ENCODE measurements at regions of chr4 and their contacts with region 1.

Region 1: GRCh38 chr4:24928708-24929107 is 15.9 kb upstream of the CCDC149 start:
- DNase-seq: peak; percentile 39 to 73 (median 67)
- H3K4me3 ChIP-seq: peak overlapping the region in 1 of 3 experiments; percentile 23
- H3K4me3 Mint-ChIP-seq: peak overlapping the region in 1 of 2 donors; percentile 5
- H3K27ac ChIP-seq: peak overlapping the region in 1 of 2 donors; percentile 34
- H3K27ac Mint-ChIP-seq: peak overlapping the region; percentile 34 to 81 (median 67)
- H3K4me1 ChIP-seq: peaks cover 49 to 50% of the 10 kb centered on the region in 2 donors
- H3K4me1 Mint-ChIP-seq: peaks cover 48% of the 10 kb centered on the region
- H3K27me3 ChIP-seq: no peaks in the 10 kb centered on the region
- H3K27me3 Mint-ChIP-seq: peaks cover 0 to 2% (median 2%) of the 10 kb centered on the region in 3 donors
- CTCF ChIP-seq: no peak

Region 2: DNA sequence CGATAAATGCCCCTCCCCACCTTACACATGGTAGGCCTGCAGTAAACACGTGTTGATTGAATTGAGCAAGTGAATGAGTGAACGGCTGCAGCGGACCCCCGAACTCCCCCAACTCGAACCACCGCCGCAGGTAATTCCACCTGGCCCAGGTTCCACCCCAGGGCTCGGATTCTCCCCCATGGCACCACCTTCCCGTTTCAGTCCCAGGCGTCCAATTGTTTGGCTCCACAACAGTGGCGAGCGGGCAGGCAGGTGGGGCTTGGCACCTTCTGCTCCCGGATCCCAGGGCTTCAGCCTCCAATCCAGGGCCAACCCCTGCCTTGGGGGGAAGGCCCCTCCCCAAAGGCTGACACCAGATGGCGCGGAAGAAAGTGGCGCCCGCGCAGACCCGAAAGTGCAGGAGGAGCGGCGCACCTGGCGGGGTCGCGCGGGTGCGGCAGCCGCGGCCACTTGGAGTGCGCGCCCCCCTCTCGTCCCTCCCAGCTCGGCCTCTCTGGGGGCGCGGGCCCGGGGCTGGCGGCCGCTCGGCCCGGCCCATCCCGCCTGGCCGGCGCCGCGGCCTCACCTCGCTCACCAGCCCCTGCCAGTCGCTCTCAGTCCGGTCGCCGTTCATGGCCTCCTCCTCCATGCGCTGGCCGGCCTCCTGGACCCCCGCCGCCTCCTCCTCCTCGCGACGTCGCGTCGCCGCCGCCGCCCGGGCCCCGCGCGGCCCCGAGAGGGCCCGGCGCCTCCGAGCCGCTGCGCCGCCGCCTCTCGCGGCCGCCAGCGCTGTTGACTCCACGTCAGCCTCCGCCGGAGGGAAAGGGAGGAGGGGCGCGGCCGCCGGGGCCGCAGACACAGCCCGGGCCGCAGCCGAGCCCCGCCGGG is 16.2 kb before region 1 on chr4 and contains the start of gene CCDC149:
- intact Hi-C with region 1: no loop called
- DNase-seq: peak; percentile 34 to 49 (median 35)
- H3K4me3 ChIP-seq: peak within 1 kb of the TSS; percentile 57 to 87 (median 79)
- H3K4me3 Mint-ChIP-seq: peak within 1 kb of the TSS; percentile 86 to 91
- H3K27ac ChIP-seq: peak within 1 kb of the TSS; percentile 14 to 73
- H3K27ac Mint-ChIP-seq: peak within 1 kb of the TSS; percentile 62 to 93 (median 77)
- H3K4me1 ChIP-seq: peaks cover 19 to 20% of the 10 kb centered on the region in 2 donors
- H3K4me1 Mint-ChIP-seq: peaks cover 25% of the 10 kb centered on the region
- H3K27me3 ChIP-seq: no peaks in the 10 kb centered on the region
- H3K27me3 Mint-ChIP-seq: peaks cover 0 to 4% (median 2%) of the 10 kb centered on the region in 3 donors
- CTCF ChIP-seq: no peak
- polyA plus RNA-seq, gene CCDC149: 5.5 to 15.8 (median 14.9) TPM

Region 3: DNA sequence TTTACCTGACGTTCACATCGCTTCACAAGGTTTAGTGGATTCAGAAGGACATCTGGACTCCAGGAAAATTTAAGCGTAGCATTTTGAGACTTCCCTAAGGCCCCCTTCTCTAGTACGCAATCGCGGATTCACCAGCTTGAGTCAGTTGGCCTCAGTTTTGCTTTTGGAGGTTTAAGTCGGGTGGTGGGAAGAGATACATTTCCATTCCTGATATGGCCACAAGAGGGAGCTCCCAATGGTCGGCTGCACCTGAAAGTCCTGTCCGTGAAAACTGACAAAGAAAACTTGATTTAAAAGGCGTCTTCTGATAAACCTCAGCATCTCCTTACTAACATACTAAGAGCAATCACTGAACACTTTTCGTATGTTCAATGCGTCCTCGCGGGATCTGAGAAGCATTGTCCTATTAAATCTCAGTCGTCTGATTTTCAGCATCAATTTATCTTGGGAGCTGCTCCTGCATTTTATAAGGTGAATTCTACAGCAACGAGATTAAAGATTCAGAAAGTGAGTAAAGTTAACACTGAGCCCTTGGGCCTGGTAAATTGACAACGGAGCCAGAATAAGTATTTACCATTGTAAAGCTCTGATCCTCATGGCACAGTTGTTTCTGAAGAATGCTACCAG is 51.5 kb after region 1 on chr4:
- intact Hi-C with region 1: loop called in 1 of 2 experiments (anchors 5 kb)
- DNase-seq: peak; percentile 78 to 96 (median 86)
- H3K4me3 ChIP-seq: peak overlapping the region; percentile 35 to 92 (median 70)
- H3K4me3 Mint-ChIP-seq: peak overlapping the region; percentile 70 to 86
- H3K27ac ChIP-seq: peak overlapping the region; percentile 73 to 83
- H3K27ac Mint-ChIP-seq: peak overlapping the region; percentile 90 to 97 (median 97)
- H3K4me1 ChIP-seq: peaks cover 55 to 59% of the 10 kb centered on the region in 2 donors
- H3K4me1 Mint-ChIP-seq: peaks cover 53% of the 10 kb centered on the region
- H3K27me3 ChIP-seq: no peaks in the 10 kb centered on the region
- H3K27me3 Mint-ChIP-seq: peaks cover 0 to 2% (median 1%) of the 10 kb centered on the region in 3 donors
- CTCF ChIP-seq: peak; percentile 89

Region 4: GRCh38 chr4:25103418-25103817 is 174.7 kb after region 1 on chr4:
- intact Hi-C with region 1: no loop called
- DNase-seq: no peak
- H3K4me3 ChIP-seq: no peak overlapping the region
- H3K4me3 Mint-ChIP-seq: no peak overlapping the region
- H3K27ac ChIP-seq: no peak overlapping the region
- H3K27ac Mint-ChIP-seq: no peak overlapping the region
- H3K4me1 ChIP-seq: no peaks in the 10 kb centered on the region
- H3K4me1 Mint-ChIP-seq: peaks cover 2% of the 10 kb centered on the region
- H3K27me3 ChIP-seq: no peaks in the 10 kb centered on the region
- H3K27me3 Mint-ChIP-seq: peaks cover 1 to 3% (median 3%) of the 10 kb centered on the region in 3 donors
- CTCF ChIP-seq: no peak